ENCODE measurements at regions of chr16 and their contacts with region 1.

Region 1: DNA sequence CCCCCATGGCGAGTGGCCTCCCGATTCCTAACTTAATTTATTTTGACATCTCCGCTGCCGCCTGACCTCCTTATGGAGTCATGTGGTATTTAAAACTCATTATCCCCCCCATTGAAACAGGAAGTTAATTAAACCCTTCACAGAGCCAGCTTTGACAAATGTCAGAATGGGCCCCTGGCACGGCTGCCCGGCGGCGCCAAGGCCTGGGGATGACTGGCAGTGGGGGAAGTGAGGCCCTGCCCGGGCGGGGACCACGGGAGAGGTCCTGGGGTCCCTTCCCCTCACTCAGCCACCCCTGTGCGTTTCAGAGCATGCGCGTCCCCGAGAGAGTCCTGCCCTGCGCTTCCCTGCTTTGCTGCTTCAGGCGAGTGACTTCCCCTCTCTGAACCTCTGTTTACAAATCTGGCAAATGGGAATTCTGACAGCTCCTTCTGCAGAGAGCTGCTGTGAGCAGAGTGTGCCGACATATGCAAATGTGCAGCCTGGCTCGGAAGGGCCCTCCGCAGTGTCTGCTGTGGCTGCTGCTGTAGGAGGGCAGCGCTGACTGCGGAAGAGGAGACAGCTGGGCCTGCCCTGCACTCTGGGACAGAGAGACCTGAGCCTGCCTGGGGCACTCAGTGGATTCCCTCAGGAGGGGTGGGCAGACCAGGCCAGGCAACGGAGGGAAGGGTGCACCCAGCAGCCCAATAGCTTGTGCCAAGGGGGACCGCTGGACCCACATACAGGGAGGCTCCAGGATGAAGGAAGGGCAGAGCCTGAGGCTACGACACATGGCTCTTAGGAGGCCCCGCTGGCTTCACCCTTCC is 4.4 kb upstream of the ZFPM1 start:
- DNase-seq: peak; percentile 42 to 85 (median 78)
- H3K4me3 ChIP-seq: peak overlapping the region in 2 of 7 experiments; percentile 11 to 33
- H3K27ac ChIP-seq: no peak overlapping the region
- H3K4me1 ChIP-seq: peaks cover 0 to 32% (median 29%) of the 10 kb centered on the region in 4 experiments
- H3K27me3 ChIP-seq: no peaks in the 10 kb centered on the region

Region 2: DNA sequence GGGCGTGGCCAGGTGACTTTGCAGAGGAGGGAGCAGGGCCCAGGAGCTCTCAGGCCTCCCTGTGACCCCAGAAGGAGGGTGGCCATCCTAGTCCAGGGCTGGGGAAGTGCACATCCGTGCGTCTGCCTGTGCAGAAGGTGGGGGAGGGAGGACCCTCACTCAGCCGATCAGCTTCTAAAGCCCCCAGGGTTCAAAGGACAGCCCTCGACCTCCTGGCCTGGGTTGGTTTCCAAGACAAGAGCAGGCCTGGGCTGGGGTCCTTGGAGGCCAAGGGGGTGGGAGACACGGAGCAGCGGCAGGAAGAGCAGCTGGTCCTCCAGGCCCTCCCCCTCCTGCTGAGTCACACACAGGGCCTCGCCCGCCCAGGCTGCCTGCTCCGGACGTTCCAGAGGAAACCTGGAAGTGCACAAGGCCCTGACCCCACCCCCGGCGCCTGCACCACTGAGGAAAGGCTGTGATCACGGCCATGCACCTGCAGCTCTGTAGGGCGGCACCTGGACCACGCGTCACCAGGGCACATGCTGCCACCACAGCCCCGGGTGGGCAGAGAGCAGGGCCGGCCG is 133.0 kb before region 1 on chr16:
- CTCF ChIA-PET with region 1: no interaction called
- POLR2A ChIA-PET with region 1: no interaction called
- DNase-seq: peak in 2 of 3 donors; percentile 42 to 64
- H3K4me3 ChIP-seq: no peak overlapping the region
- H3K27ac ChIP-seq: no peak overlapping the region
- H3K4me1 ChIP-seq: peaks cover 0 to 10% (median 4%) of the 10 kb centered on the region in 4 experiments
- H3K27me3 ChIP-seq: peaks cover 0 to 2% (median 0%) of the 10 kb centered on the region in 5 experiments

Region 3: DNA sequence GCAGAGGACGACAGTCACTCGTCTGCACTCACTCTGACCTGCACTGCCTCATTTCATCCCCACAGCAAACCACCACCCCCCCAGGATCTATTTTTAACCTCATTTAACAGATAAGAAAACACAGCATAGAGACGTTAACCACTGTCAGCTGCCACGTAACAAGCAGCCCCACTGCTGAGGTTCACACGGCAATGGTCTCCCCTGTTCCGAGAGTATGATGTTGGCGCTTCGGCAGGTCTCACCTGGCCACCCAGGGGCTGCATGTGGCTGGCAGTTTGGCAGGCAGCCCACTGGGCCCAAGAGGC is 49.8 kb before region 1 on chr16:
- CTCF ChIA-PET with region 1: no interaction called
- POLR2A ChIA-PET with region 1: no interaction called
- DNase-seq: no peak
- H3K4me3 ChIP-seq: no peak overlapping the region
- H3K27ac ChIP-seq: no peak overlapping the region
- H3K4me1 ChIP-seq: no peaks in the 10 kb centered on the region
- H3K27me3 ChIP-seq: no peaks in the 10 kb centered on the region

Region 4: GRCh38 chr16:88437373-88437964 is 11.2 kb before region 1 on chr16:
- CTCF ChIA-PET with region 1: interaction called, 12 read pairs
- POLR2A ChIA-PET with region 1: interaction called, 3 read pairs
- DNase-seq: peak; percentile 43 to 69 (median 63)
- H3K4me3 ChIP-seq: no peak overlapping the region
- H3K27ac ChIP-seq: no peak overlapping the region
- H3K4me1 ChIP-seq: no peaks in the 10 kb centered on the region
- H3K27me3 ChIP-seq: no peaks in the 10 kb centered on the region

Measured in common myeloid progenitor, CD34-positive (primary cell).